Endothelial cell of umbilical vein (primary cell): ENCODE measurements at regions of chr15 and their contacts with region 1.

Region 1: GRCh38 chr15:41465822-41466421 is 27.8 kb upstream of the ITPKA start:
- DNase-seq: peak; percentile 75
- H3K4me3 ChIP-seq: no peak overlapping the region
- H3K27ac ChIP-seq: no peak overlapping the region
- H3K4me1 ChIP-seq: peaks cover 5% of the 10 kb centered on the region
- H3K27me3 ChIP-seq: no peaks in the 10 kb centered on the region
- CTCF ChIP-seq: peak; percentile 79 to 89
- POLR2A ChIP-seq: no peak

Region 2: DNA sequence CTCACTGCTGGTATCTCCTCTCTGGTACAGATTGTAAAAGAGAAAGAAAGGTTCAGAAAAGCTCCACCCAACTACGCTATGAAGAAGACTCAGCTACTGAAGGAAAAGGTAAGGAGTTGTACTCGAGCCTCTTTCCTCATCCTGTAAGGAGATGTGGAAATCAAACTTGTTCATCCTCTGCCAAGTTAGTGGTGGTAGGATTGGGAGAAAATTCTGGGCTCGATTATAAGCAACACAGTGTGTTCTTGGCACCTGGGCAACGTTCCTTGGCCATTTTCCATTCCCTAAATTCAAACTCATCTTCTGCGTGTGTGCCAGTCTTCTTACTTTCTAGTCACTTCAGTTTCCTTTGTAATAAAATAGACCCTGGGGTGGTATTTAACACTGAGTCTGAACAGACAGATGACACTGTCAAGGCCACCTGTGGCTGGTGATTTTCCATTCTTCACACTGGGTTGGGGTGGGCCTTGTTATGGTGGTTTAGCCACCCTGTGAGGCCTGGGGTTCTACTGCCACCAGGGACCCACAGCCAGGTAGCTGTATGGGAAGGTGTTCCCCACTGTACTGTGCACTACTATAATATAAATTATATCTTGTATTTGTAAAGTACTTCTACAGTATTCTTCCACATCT is 10.6 kb after region 1 on chr15:
- CTCF ChIA-PET with region 1: interaction called, 37 read pairs
- POLR2A ChIA-PET with region 1: no interaction called
- dilution Hi-C with region 1: no loop called
- intact Hi-C with region 1: no loop called
- DNase-seq: no peak
- H3K4me3 ChIP-seq: no peak overlapping the region
- H3K27ac ChIP-seq: no peak overlapping the region
- H3K4me1 ChIP-seq: no peaks in the 10 kb centered on the region
- H3K27me3 ChIP-seq: no peaks in the 10 kb centered on the region
- CTCF ChIP-seq: no peak
- POLR2A ChIP-seq: no peak

Region 3: DNA sequence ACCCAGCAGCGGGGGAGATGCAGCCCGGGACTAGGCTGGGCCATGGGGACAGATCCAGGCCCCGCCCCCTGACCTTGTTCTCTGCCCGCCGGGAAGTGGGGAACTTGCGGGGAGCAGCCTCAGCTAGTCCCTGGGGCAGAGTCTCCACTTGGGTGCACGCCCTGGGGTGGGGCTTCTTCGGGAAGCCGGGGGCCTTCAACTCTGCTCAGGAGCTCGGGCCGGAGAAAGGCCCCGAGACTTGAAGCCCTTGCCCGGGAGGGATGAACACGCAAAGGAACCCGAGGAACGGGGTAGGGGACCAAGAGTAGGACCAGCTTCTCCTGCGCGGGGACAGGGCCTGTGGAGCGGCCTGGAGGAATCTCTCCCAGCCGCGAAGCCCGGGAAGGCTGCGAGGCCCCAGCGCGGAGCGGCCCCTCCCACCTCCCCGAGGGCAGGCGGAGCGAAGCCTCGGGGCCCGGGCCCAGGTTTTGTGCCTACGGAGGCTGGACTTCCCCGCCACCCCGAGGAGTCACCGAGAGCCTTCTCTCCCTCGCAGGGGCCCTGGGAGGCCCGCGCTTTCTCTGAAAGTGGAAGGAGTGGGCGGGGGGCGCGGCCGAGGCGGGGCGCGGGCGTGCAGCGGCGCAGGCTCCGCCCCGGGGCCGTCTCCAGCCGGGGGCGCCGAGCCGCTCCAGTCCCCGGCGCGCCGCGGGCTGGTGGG is 27.4 kb after region 1 on chr15 and contains the start of gene ITPKA:
- CTCF ChIA-PET with region 1: interaction called, 16 read pairs
- POLR2A ChIA-PET with region 1: no interaction called
- dilution Hi-C with region 1: no loop called
- intact Hi-C with region 1: no loop called
- DNase-seq: peak; percentile 54
- H3K4me3 ChIP-seq: peak within 1 kb of the TSS; percentile 13 to 51 (median 49)
- H3K27ac ChIP-seq: no peak within 1 kb of the TSS
- H3K4me1 ChIP-seq: peaks cover 30% of the 10 kb centered on the region
- H3K27me3 ChIP-seq: peaks cover 19 to 30% of the 10 kb centered on the region in 2 experiments
- CTCF ChIP-seq: no peak
- POLR2A ChIP-seq: no peak
- total RNA-seq, gene ITPKA: 0.18 and 0.66 TPM in 2 replicates

Region 4: DNA sequence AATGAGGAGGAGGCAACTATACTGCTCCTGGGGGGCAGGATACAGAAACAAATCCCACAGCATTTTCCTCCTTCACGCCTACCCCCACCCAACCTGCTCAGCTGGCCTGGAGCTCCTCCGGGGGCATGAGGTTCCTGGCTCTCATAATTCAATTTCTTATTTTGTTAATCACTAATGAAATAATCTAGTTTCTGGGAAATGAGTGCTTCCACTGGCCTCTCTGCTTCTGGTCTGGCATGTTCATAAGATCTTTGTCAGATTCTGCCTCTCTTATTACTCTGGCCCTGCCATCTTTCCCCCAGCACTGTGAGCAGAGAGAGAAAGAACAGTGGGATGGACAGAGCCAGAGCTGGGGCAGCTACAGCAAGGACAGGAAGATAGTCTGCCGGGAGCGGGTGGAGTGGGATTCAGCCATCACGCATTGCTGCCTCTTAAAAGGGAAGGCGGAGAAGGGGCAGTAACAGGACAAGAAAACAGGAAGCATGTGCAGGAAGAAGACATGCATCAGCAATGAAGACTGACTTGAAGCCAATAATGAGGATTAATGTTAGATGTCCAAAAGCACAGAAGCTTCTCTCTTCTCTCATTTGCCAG is 64.5 kb after region 1 on chr15:
- CTCF ChIA-PET with region 1: interaction called, 13 read pairs
- POLR2A ChIA-PET with region 1: no interaction called
- dilution Hi-C with region 1: no loop called
- intact Hi-C with region 1: no loop called
- DNase-seq: peak; percentile 28
- H3K4me3 ChIP-seq: no peak overlapping the region
- H3K27ac ChIP-seq: peak overlapping the region; percentile 5
- H3K4me1 ChIP-seq: peaks cover 8% of the 10 kb centered on the region
- H3K27me3 ChIP-seq: no peaks in the 10 kb centered on the region
- CTCF ChIP-seq: no peak
- POLR2A ChIP-seq: no peak

Region 5: DNA sequence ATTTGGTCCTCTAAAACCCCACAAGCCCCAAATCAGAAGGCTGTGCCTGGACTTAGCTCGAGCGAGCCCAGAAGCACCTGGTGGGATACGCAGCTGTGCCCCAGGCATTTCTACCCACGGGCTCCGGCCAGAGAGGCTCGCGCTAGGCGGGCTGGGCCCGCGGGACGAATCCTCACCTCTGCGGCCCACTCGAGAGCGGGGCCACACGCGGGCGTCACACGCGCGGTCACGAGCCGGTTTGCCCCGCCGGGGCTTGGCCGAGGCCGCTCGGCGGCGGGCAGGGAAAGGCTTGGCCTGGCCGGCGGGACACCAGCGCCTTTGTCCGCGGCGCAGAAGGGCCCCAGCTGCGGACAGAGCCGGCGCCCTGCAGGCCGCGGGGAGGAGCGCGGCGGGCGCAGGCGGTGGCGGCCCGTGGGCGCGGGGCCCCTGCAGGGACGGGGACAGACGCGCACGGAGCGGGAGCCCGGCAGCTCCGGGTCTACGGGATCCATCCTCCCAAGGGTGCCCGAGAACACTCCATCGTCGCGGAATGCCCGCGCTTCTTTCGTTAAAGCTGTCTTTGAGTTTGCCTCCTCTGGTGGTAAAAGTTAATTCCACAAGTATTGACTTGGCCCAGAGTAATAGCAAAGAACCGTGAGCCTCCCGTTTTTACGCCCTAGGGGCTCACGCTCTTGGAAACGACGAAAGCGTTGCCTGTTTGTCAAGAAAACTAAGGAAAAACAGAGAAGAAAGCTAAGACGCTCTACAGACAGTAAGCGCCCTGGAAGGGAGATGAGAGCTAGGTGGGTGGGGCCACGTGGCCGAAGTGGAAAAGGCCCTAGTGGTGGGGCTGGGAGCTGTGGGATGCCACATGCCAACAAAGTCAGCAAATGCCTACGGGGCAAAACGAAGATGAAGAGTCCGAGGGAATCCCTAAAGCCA is 119.5 kb after region 1 on chr15:
- CTCF ChIA-PET with region 1: interaction called, 33 read pairs
- POLR2A ChIA-PET with region 1: no interaction called
- dilution Hi-C with region 1: no loop called
- intact Hi-C with region 1: no loop called
- DNase-seq: peak; percentile 73
- H3K4me3 ChIP-seq: peak overlapping the region; percentile 29 to 59 (median 51)
- H3K27ac ChIP-seq: no peak overlapping the region
- H3K4me1 ChIP-seq: peaks cover 9% of the 10 kb centered on the region
- H3K27me3 ChIP-seq: peaks cover 2 to 5% of the 10 kb centered on the region in 2 experiments
- CTCF ChIP-seq: peak; percentile 32 to 62
- POLR2A ChIP-seq: no peak

Region 6: DNA sequence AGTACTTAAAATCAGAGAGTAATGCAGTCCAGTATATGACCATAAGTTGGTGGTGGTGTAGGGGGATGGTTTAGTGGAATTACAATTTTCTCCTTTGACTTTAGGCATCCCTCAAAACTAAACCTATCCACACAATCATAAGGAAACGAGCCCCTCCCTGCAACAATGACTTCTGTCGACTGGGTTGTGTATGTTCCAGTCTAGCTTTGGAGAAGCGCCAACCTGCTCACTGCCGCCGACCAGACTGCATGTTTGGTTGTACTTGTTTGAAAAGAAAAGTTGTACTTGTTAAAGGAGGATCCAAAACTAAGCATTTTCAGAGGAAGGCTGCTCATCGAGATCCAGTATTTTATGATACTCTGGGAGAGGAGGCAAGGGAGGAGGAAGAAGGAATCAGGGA is 247.1 kb after region 1 on chr15:
- CTCF ChIA-PET with region 1: interaction called, 4 read pairs
- POLR2A ChIA-PET with region 1: no interaction called
- dilution Hi-C with region 1: no loop called
- intact Hi-C with region 1: loop called (anchors 10 kb)
- DNase-seq: peak; percentile 65
- H3K4me3 ChIP-seq: no peak overlapping the region
- H3K27ac ChIP-seq: no peak overlapping the region
- H3K4me1 ChIP-seq: no peaks in the 10 kb centered on the region
- H3K27me3 ChIP-seq: no peaks in the 10 kb centered on the region
- CTCF ChIP-seq: no peak
- POLR2A ChIP-seq: no peak

Region 7: DNA sequence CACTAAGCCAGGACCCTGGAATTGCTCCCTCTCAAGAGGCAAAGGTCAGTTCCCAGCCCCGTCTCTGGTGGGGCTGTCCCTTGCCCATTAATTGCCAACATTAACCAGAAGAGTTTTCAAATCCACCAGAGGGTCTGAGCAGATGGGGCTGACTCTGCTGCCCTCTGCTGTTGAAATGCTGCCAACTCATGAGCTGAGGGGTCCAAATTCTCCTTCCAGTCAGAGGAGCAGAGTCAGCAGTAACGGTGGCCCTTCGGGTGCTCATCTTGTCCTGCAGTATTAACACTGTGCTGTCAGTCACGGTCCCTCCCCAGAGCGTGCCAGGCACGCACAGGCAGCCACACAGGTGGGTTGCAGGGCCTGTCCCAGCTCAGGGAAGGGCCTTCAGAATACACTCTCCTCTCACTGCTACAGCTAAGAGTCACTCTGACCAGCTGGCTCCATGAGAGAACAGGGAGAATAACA is 438.7 kb after region 1 on chr15:
- CTCF ChIA-PET with region 1: interaction called, 11 read pairs
- POLR2A ChIA-PET with region 1: no interaction called
- dilution Hi-C with region 1: no loop called
- intact Hi-C with region 1: no loop called
- DNase-seq: peak; percentile 75
- H3K4me3 ChIP-seq: no peak overlapping the region
- H3K27ac ChIP-seq: no peak overlapping the region
- H3K4me1 ChIP-seq: no peaks in the 10 kb centered on the region
- H3K27me3 ChIP-seq: no peaks in the 10 kb centered on the region
- CTCF ChIP-seq: peak; percentile 85
- POLR2A ChIP-seq: no peak

Region 8: GRCh38 chr15:41944313-41944940 is 478.5 kb after region 1 on chr15:
- CTCF ChIA-PET with region 1: no interaction called
- POLR2A ChIA-PET with region 1: no interaction called
- dilution Hi-C with region 1: no loop called
- intact Hi-C with region 1: no loop called
- DNase-seq: peak; percentile 82
- H3K4me3 ChIP-seq: no peak overlapping the region
- H3K27ac ChIP-seq: peak overlapping the region; percentile 99
- H3K4me1 ChIP-seq: peaks cover 91% of the 10 kb centered on the region
- H3K27me3 ChIP-seq: no peaks in the 10 kb centered on the region
- CTCF ChIP-seq: no peak
- POLR2A ChIP-seq: peak; percentile 20